Tibial artery (tissue), 4 donors: ENCODE measurements at regions of chr9 and their contacts with region 1.

Region 1: GRCh38 chr9:3656224-3656623 is 130.4 kb upstream of the RFX3 start:
- DNase-seq: no peak
- H3K4me3 ChIP-seq: no peak overlapping the region
- H3K27ac ChIP-seq: no peak overlapping the region
- H3K4me1 ChIP-seq: no peaks in the 10 kb centered on the region
- H3K27me3 ChIP-seq: no peaks in the 10 kb centered on the region
- CTCF ChIP-seq: no peak

Region 2: DNA sequence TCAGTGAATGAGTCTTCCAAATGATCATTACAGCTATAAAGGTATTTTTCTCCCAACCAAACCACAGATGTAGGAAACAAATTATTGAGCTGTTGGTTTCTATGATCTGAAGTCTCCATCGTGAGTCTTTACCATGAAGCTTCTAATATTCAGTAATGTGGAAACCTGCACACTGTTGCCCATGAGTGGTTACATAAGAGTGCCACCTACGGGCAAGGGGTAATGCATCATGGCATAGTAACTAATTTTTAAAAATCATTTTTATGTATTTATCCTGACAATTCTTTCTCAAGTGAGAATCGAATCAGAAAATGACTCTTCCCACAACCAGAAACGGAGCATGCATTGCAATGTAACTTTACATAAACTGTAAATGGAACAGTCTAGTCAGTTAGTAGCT is 1923.6 kb before region 1 on chr9:
- intact Hi-C with region 1: loop called (anchors 5 kb)
- DNase-seq: no peak
- H3K4me3 ChIP-seq: no peak overlapping the region
- H3K27ac ChIP-seq: no peak overlapping the region
- H3K4me1 ChIP-seq: no peaks in the 10 kb centered on the region
- H3K27me3 ChIP-seq: no peaks in the 10 kb centered on the region
- CTCF ChIP-seq: no peak

Region 3: GRCh38 chr9:3508521-3509291 is 147.5 kb before region 1 on chr9:
- intact Hi-C with region 1: no loop called
- DNase-seq: no peak
- H3K4me3 ChIP-seq: no peak overlapping the region
- H3K27ac ChIP-seq: peak overlapping the region in 1 of 2 donors; percentile 12
- H3K4me1 ChIP-seq: peaks cover 0 to 15% (median 3%) of the 10 kb centered on the region in 4 donors
- H3K27me3 ChIP-seq: no peaks in the 10 kb centered on the region
- CTCF ChIP-seq: no peak

Region 4: DNA sequence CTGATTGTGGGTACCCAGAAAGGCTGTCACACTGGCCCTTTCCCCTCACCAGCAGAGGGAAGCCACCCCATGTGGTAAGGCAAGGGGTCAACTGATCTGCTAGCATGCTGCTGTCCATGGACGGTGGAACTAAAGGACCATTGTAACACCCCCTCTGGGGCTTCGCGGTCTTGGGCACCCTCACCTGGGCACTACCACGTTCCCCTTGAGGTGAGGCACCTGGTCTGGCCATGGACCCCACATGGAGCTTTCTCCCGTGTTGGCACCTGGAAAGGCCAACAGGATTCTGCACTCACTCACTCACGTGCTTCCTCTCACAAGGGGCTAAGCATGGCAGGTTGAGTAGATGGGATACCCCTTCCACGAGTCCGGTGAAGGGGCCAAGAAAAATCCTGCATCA is 58.4 kb before region 1 on chr9:
- intact Hi-C with region 1: no loop called
- DNase-seq: no peak
- H3K4me3 ChIP-seq: no peak overlapping the region
- H3K27ac ChIP-seq: no peak overlapping the region
- H3K4me1 ChIP-seq: no peaks in the 10 kb centered on the region
- H3K27me3 ChIP-seq: no peaks in the 10 kb centered on the region
- CTCF ChIP-seq: no peak